Pancreas (tissue), 10 donors: ENCODE measurements at regions of chr14 and their contacts with region 1.

Region 1: GRCh38 chr14:89504602-89505313 is 87.7 kb upstream of the FOXN3 start:
- DNase-seq: no peak
- ATAC-seq: peak in 2 of 4 donors; percentile 61 to 66
- H3K4me3 ChIP-seq: no peak overlapping the region
- H3K27ac ChIP-seq: no peak overlapping the region
- H3K4me1 ChIP-seq: no peaks in the 10 kb centered on the region
- H3K27me3 ChIP-seq: no peaks in the 10 kb centered on the region
- CTCF ChIP-seq: no peak

Region 2: GRCh38 chr14:89598548-89599186 is 93.9 kb after region 1 on chr14:
- intact Hi-C with region 1: no loop called
- DNase-seq: no peak
- ATAC-seq: no peak
- H3K4me3 ChIP-seq: no peak overlapping the region
- H3K27ac ChIP-seq: no peak overlapping the region
- H3K4me1 ChIP-seq: no peaks in the 10 kb centered on the region
- H3K27me3 ChIP-seq: no peaks in the 10 kb centered on the region
- CTCF ChIP-seq: no peak

Region 3: DNA sequence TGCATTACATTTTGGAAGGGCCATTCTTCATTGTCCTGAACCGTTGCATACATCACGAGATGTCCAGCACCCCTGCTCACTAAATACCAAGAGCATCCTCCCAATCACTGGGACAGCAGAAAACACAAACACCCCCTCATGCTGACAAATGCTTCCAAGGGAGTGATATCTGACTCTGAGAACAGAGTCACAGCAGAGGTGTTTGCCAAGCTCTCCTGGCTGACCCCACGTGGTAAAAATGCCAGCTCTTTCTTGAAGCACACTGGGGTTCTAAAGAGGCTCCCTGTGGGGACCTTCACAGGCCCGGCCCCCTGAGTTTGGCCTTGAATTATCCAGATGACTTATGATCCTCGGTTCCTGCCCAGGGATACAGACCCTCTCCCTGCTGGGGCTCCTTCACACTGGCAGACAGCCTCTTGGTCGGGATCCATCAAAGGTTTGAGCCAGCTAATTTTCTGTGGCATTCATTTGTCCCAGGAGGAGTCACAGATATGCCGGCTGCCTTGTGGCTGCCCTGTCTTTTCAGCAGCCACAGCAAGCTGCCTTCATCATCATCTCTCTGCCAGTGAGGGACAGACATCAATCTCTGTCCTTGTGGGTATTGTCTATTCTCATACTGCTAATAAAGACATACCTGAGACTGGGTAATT is 708.5 kb after region 1 on chr14:
- intact Hi-C with region 1: loop called in 1 of 3 experiments (anchors 5 kb)
- DNase-seq: no peak
- ATAC-seq: no peak
- H3K4me3 ChIP-seq: no peak overlapping the region
- H3K27ac ChIP-seq: no peak overlapping the region
- H3K4me1 ChIP-seq: no peaks in the 10 kb centered on the region
- H3K27me3 ChIP-seq: no peaks in the 10 kb centered on the region
- CTCF ChIP-seq: no peak